Heart left ventricle (tissue), 16 donors: ENCODE measurements at regions of chr15 and their contacts with region 1.

Region 1: DNA sequence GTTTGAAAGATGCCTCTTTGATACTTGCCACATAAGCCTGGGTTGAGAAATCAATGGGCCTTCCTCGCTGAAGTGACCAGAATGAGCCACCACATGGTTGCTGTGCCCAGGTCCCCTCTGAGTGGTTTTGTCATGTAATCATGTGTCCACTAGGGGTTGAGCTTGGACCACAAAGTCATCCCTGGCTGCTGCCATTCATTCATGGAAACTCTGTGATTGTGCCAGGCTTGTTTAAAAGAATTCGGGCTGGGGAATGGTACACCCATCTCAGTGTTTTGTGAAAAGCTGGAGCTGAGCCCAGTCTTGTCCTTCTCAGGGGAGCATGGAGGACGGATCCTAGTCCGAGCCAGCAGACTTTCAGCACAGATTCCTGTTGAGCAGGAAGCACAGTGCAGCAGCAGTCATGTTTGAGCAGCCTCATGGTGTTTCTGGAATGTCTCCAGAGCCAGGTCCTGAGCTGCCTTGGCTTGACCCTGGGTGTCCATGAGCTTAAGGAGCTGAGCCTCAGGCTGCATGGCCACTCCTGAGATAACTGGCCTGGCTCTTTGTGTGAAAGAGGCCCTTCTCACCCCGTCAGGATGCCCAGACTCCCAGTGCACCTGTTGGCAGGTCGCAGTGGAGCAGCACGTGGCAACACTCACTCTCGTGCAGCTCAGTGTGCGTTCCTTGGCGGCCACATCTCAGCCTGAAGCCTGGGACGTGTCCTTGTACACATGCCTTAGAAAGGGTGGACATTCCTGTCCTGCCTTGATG is 260.3 kb upstream of the TPM1 start:
- DNase-seq: peak; percentile 71 to 92 (median 89)
- ATAC-seq: peak; percentile 90 to 93 (median 92)
- H3K4me3 ChIP-seq: no peak overlapping the region
- H3K27ac ChIP-seq: peak overlapping the region; percentile 27 to 88 (median 71)
- H3K4me1 ChIP-seq: peaks cover 3 to 57% (median 40%) of the 10 kb centered on the region in 12 donors
- H3K27me3 ChIP-seq: no peaks in the 10 kb centered on the region
- CTCF ChIP-seq: peak; percentile 51 to 83 (median 73)
- POLR2A ChIP-seq: no peak

Region 2: GRCh38 chr15:62828364-62828763 is 46.1 kb after region 1 on chr15:
- intact Hi-C with region 1: no loop called
- DNase-seq: no peak
- ATAC-seq: peak in 1 of 4 donors; percentile 17
- H3K4me3 ChIP-seq: no peak overlapping the region
- H3K27ac ChIP-seq: no peak overlapping the region
- H3K4me1 ChIP-seq: peaks cover 0 to 11% (median 0%) of the 10 kb centered on the region in 12 donors
- H3K27me3 ChIP-seq: no peaks in the 10 kb centered on the region
- CTCF ChIP-seq: no peak
- POLR2A ChIP-seq: no peak

Region 3: DNA sequence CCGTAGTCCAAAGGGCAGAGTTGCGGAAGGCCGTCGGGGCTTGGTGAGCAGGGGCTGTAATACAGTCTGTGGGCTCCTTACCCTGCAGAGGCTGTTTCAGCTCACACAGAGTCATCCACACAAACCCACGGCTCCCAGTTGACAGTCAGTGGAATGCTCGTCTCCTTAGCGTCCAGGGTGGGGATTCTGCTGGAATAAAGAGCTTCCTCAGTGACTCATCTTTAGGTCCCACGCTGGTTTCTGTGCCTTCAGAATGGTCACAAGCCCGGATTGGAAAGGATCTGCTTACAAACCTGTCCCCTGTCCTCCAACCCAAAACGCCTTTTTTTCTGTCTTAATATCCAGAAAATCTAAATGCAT is 59.0 kb after region 1 on chr15:
- intact Hi-C with region 1: loop called in 7 of 10 experiments (anchors 5 to 10 kb)
- DNase-seq: no peak
- ATAC-seq: peak in 1 of 4 donors; percentile 15
- H3K4me3 ChIP-seq: peak overlapping the region in 1 of 12 donors; percentile 21
- H3K27ac ChIP-seq: peak overlapping the region in 10 of 12 donors; percentile 46 to 86 (median 76)
- H3K4me1 ChIP-seq: peaks cover 0 to 41% (median 11%) of the 10 kb centered on the region in 12 donors
- H3K27me3 ChIP-seq: no peaks in the 10 kb centered on the region
- CTCF ChIP-seq: no peak
- POLR2A ChIP-seq: no peak

Region 4: DNA sequence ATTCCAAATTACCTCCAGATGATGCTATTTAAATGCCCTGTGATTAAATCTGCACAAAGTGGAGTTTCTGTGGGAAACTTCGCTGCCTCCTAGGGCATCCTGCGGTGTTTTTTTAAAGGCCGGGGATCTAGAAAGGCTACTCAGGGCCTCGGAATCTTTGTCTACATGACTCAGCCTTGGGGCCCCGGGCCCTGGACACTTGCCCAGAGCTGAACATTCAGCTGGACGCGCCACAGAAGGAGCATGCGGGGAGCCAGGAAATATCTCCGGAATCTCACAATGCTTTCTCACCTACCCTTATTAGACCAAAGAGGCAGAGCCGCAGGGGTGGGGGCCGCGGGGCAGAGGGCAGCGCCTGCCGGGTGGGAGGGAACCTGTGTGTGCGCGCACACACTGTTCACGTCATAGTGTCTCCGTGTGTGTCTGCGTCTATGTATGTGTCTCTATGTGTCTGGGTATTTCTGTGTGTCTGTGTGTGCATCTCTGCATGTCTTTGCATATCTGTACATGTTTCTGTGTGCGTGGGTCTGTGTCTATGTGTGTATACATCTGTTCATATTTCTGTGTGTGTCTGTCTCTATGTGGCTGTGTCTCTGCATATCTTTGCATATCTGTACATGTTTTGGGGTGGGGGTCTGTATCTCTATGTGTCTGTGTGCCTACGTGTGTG is 114.9 kb after region 1 on chr15:
- intact Hi-C with region 1: loop called in 2 of 10 experiments (anchors 5 to 10 kb)
- DNase-seq: peak; percentile 92 to 95 (median 94)
- ATAC-seq: peak; percentile 72 to 88 (median 85)
- H3K4me3 ChIP-seq: peak overlapping the region in 7 of 12 donors; percentile 6 to 34 (median 20)
- H3K27ac ChIP-seq: peak overlapping the region; percentile 78 to 97 (median 90)
- H3K4me1 ChIP-seq: peaks cover 3 to 73% (median 37%) of the 10 kb centered on the region in 12 donors
- H3K27me3 ChIP-seq: no peaks in the 10 kb centered on the region
- CTCF ChIP-seq: no peak
- POLR2A ChIP-seq: peak in 1 of 2 donors; percentile 17

Region 5: GRCh38 chr15:63041974-63042819 is 260.0 kb after region 1 on chr15 and contains the start of gene TPM1:
- intact Hi-C with region 1: loop called in 7 of 10 experiments (anchors 2 to 10 kb)
- DNase-seq: peak; percentile 91 to 95 (median 94)
- ATAC-seq: peak; percentile 49 to 82 (median 76)
- H3K4me3 ChIP-seq: peak within 1 kb of the TSS; percentile 54 to 95 (median 85)
- H3K27ac ChIP-seq: peak within 1 kb of the TSS; percentile 88 to 99 (median 96)
- H3K4me1 ChIP-seq: peaks cover 0 to 38% (median 8%) of the 10 kb centered on the region in 12 donors
- H3K27me3 ChIP-seq: peaks cover 0 to 69% (median 0%) of the 10 kb centered on the region in 9 donors
- CTCF ChIP-seq: peak in 2 of 12 donors; percentile 39 to 42
- POLR2A ChIP-seq: peak in 1 of 2 donors; percentile 98
- total RNA-seq, gene TPM1: 9,722 to 18,689 (median 13,330) TPM

Region 6: DNA sequence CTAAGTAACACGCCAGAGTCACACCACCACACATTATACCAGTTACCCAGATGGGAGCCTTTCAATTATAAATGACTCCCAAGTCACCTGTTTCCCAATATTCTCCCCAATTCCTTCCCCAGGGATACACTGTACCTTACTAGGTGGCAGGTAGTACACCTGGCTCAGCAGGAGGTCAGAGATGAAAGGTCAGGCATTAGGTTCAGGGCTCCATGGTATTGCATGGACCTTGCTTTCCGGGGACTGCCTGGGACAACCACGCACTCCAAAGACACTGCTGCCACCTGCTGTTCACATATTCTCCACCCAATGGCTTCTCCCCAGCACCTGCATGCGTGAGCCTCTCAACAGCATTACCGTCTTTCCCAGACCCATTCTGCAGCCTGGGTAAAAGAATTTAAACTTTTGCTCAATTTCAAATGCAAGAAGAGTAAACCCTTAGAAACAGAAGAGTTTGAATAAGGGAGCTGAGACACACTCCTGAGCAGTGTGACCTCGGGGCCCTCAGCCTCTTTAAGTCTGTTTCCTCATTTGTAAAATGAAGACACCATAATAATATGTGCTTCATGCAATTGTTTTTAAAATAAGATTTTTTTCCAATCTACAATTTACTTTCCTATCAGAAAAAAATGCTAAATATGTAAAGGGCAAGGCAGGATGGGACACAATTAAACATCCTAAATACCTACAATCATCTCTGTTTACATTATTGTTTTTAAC is 311.4 kb after region 1 on chr15:
- intact Hi-C with region 1: loop called (anchors 1 to 5 kb)
- DNase-seq: peak; percentile 81 to 87 (median 83)
- ATAC-seq: peak; percentile 91 to 95 (median 92)
- H3K4me3 ChIP-seq: no peak overlapping the region
- H3K27ac ChIP-seq: peak overlapping the region in 6 of 12 donors; percentile 41 to 67 (median 49)
- H3K4me1 ChIP-seq: peaks cover 0 to 28% (median 17%) of the 10 kb centered on the region in 12 donors
- H3K27me3 ChIP-seq: no peaks in the 10 kb centered on the region
- CTCF ChIP-seq: peak; percentile 75 to 96 (median 88)
- POLR2A ChIP-seq: no peak

Region 7: DNA sequence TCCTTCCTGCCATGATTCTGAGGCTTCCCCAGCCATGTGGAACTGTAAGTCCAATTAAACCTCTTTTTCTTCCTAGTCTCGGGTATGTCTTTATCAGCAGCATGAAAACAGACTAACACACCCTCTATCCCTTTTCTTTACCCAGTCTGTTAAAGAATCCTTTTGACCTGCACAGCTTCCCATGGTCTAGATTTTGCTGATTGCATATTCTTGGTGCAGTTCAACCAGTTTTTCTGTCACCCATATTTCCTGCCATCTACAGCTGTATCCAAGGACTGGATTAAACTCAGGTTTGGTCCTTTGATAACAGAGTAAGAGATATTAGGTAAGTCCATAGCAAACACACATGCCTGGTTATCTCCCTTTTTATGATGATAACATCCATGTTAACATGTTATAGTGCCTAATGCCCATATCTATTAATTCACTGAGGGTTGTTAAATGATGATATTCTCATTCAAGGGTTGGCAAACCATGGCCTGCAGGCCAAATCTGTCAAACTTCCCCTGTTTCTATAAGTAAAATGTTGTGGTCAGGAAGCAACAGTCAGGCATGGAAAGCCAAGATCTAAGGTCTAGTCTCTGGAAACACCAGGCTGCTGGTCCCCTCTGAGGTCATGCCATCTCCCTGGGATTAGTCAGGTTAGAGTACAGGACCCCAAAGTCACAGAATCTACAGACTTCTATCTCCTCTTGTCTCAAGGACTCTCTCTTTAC is 1066.4 kb after region 1 on chr15:
- intact Hi-C with region 1: no loop called
- DNase-seq: no peak
- ATAC-seq: no peak
- H3K4me3 ChIP-seq: no peak overlapping the region
- H3K27ac ChIP-seq: no peak overlapping the region
- H3K4me1 ChIP-seq: no peaks in the 10 kb centered on the region
- H3K27me3 ChIP-seq: no peaks in the 10 kb centered on the region
- CTCF ChIP-seq: no peak
- POLR2A ChIP-seq: no peak